Activated T-helper 1 cell treated with anti-CD3 and anti-CD28 coated beads, Interleukin-12 subunit alpha, Interleukin-12 subunit beta, Interleukin-2, Interleukin-4 antibody, amounts not matched to agents 30 ng/mL and 10 ng/mL and 1 ng/mL, durations not matched to agents 14 hours and 24 hours and 36 hours (primary cell): ENCODE measurements at regions of chr6 and their contacts with region 1.

Region 1: DNA sequence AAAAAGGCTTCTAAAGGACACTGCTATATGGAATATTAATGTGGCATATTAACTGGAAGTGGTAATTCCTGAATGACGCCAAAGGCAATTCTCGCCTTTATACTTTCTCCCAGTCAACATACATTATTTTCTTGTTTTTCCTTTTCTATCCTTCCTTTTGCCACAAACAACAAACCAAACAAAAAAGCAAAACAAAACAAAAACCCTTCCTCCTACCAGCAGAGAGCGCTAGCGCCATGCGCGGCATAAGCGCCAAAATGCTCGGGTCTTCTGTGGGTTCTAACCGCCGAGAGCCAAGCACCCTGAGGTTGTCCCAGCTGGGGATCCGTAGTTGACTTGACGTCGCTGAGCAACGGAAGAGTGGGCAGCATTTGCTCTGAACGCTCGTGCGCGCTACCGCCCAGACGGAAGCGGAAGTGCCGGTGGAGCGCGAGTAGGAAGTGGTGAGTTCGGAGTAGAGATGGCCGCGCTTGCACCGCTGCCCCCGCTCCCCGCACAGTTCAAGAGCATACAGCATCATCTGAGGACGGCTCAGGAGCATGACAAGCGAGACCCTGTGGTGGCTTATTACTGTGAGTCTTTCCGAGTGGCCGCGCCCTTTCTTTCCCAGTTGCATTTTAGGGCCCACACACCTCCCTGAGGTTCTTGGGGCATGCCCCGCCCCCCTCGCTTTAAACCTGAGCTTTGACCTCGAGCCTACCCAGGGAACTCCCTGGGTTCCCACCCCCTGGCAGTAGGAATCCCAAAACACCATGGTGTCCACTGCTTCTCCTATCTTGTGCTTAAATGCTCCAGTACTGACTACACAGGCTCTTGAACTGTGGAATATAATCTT is at the starts of genes NMBR and VTA1:
- DNase-seq: peak; percentile 95
- H3K4me3 Mint-ChIP-seq: peak within 1 kb of the TSS; percentile 90
- H3K27ac Mint-ChIP-seq: peak within 1 kb of the TSS; percentile 79
- H3K4me1 Mint-ChIP-seq: peaks cover 37% of the 10 kb centered on the region
- H3K27me3 Mint-ChIP-seq: no peaks in the 10 kb centered on the region
- total RNA-seq, gene NMBR: not detected in 2 replicates
- total RNA-seq, gene VTA1: 52.4 and 59.6 TPM in 2 replicates

Region 2: GRCh38 chr6:142301651-142302370 is 154.8 kb after region 1 on chr6 and contains the start of gene ADGRG6:
- intact Hi-C with region 1: loop called (anchors 10 kb)
- DNase-seq: no peak
- H3K4me3 Mint-ChIP-seq: peak within 1 kb of the TSS; percentile 70
- H3K27ac Mint-ChIP-seq: no peak within 1 kb of the TSS
- H3K4me1 Mint-ChIP-seq: no peaks in the 10 kb centered on the region
- H3K27me3 Mint-ChIP-seq: peaks cover 40% of the 10 kb centered on the region
- total RNA-seq, gene ADGRG6: not detected in 2 replicates

Region 3: GRCh38 chr6:142395768-142396231 is 248.8 kb after region 1 on chr6:
- intact Hi-C with region 1: loop called (anchors 1 kb)
- DNase-seq: peak; percentile 12
- H3K4me3 Mint-ChIP-seq: no peak overlapping the region
- H3K27ac Mint-ChIP-seq: peak overlapping the region; percentile 10
- H3K4me1 Mint-ChIP-seq: peaks cover 15% of the 10 kb centered on the region
- H3K27me3 Mint-ChIP-seq: peaks cover 56% of the 10 kb centered on the region

Region 4: DNA sequence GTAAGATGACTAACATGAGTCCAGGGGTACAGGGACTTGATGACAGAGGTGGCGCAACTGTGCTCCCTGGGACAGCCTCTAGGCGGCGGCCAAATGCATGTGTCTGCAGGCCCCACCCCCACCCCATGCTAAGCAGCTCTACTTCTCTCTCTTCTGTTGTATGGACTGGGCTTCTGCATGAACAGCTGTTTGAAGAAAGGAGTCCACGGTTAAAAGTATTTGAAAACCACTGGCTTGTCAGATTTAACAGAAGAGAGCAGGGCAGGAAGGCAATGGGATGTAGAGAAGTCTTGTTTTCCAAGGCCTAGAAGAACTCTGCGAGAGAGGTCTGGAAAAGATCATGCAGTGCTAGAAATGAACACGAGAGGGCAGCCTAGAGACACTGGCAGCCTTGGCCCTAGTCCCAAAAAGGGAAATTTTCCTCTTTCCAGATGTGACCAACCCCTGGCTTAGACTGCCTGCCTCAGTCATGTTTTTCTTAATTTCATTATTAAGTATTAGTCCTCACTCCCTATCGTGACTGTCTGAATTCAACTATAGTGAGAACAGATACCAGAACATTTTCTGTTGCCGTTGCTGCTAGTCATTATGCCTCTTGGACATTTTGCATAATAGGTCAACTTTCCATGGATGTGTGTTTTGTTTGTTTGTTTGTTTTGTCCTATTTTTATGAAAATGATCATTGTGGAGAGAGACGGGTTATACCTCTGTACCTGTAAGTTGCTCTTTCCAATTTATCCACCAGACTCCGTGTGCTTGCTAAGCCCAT is 419.8 kb after region 1 on chr6:
- intact Hi-C with region 1: loop called (anchors 2 kb)
- DNase-seq: peak; percentile 38
- H3K4me3 Mint-ChIP-seq: no peak overlapping the region
- H3K27ac Mint-ChIP-seq: no peak overlapping the region
- H3K4me1 Mint-ChIP-seq: peaks cover 48% of the 10 kb centered on the region
- H3K27me3 Mint-ChIP-seq: no peaks in the 10 kb centered on the region

Region 5: DNA sequence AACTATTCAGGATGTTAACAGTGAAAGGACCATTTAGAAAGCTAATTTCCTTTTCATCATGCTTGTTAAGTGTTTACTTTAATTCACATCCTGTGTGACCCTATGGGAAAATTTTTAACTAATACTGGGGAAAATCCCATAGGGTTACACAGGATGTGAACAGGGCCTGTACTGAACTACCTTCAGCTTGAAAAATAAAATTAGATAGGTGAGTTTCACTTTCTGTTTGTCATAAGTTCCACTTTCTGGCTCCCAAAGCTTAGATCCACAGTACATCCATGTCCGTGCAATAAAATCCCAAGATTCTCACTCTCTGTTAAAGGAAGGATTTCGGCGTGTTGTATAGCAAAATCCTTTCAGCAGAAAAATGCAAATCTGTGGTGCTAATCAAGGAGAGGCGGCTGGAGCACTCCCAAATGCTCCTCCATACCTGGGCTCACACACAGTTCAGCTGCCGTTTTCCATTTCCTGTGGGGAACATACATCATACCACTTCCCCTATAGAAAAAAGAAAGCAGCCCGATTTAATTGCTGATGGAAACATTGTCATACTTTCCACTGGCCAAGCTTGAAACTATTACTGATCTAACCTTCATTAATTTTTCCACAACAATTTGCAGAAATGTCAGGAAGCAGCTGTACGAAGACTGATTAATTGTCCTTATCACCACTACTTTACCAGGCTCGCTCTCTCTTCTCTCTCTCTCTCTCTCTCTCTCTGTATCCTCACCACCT is 672.7 kb after region 1 on chr6:
- intact Hi-C with region 1: loop called (anchors 5 kb)
- DNase-seq: peak; percentile 50
- H3K4me3 Mint-ChIP-seq: peak overlapping the region; percentile 85
- H3K27ac Mint-ChIP-seq: peak overlapping the region; percentile 98
- H3K4me1 Mint-ChIP-seq: peaks cover 75% of the 10 kb centered on the region
- H3K27me3 Mint-ChIP-seq: peaks cover 3% of the 10 kb centered on the region

Region 6: DNA sequence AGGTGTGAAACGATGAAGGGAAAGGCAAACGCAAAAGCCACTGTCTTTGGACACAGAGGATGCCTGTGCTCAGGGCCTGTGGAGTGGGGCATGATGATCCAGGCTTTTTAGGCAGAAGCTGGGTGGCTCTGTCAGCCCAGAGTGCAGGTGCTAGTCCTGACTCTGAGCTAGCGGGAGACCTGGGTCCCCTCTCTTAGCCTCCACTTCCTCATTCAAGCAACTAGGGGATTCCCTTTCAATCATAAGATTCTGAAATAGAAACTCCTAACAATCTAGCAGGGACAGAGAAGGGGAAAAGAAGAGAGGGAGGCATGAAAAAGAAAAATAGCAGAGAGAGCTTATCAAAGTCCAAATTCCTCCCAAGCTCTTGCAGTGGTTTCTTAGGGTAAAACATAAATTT is 805.6 kb after region 1 on chr6:
- intact Hi-C with region 1: loop called (anchors 10 kb)
- DNase-seq: no peak
- H3K4me3 Mint-ChIP-seq: no peak overlapping the region
- H3K27ac Mint-ChIP-seq: no peak overlapping the region
- H3K4me1 Mint-ChIP-seq: peaks cover 22% of the 10 kb centered on the region
- H3K27me3 Mint-ChIP-seq: no peaks in the 10 kb centered on the region

Region 7: DNA sequence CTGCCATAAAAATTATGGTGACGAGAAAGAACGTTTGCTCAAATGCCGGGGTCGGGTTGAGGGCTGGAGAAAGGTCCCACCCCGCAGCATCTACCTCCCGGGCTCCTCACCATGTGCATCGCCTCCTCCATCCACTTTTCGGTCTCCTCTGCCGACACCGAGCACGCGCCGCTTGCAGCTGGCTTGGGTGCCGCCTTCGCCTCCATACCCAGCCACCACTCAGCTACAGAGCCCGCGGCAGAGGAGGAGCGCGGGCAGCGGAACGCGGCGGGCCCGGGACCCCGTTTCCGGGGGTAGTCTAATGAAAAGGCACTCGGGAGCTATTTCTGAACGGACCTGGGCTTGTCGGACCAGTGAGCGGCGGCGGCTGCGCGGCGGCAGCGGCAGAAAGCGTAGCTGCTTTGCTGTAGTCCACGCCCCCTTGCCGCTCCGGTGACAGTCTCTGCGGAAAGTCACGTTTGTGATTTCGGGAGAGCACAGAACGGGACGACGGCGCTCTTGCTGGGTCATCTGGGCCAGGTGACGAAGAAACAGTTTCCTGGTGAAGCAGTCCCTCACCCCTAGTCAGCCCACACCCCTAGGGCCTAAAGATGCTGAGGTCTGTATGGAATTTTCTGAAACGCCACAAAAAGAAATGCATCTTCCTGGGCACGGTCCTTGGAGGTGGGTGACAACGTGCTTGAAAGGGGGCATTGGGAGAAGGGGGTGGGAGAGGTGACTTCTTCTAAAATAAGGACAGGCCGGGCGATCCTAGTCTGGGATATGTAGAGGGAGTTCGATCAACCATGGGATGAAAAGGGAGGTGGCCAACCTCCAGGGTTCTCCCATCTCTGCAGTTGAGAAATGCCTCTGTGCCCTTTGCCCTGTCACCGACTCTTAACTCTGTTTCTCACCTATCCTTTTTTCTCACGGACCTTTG is 1303.7 kb after region 1 on chr6 and contains the starts of genes ADAT2 and PEX3:
- intact Hi-C with region 1: loop called (anchors 1 kb)
- DNase-seq: peak; percentile 92
- H3K4me3 Mint-ChIP-seq: peak within 1 kb of the TSS; percentile 98
- H3K27ac Mint-ChIP-seq: peak within 1 kb of the TSS; percentile 99
- H3K4me1 Mint-ChIP-seq: peaks cover 50% of the 10 kb centered on the region
- H3K27me3 Mint-ChIP-seq: no peaks in the 10 kb centered on the region
- total RNA-seq, gene ADAT2: 39.0 and 43.6 TPM in 2 replicates
- total RNA-seq, gene PEX3: 23.6 and 25.0 TPM in 2 replicates